SK-N-SH (cell line): ENCODE measurements at regions of chr9 and their contacts with region 1.

Region 1: GRCh38 chr9:128995791-128996190 is 32.3 kb downstream of the SH3GLB2 start:
- DNase-seq: no peak
- H3K4me3 ChIP-seq: no peak overlapping the region
- H3K27ac ChIP-seq: no peak overlapping the region
- H3K4me1 ChIP-seq: no peaks in the 10 kb centered on the region; a peak in 1 of 4 replicates
- H3K27me3 ChIP-seq: no peaks in the 10 kb centered on the region
- CTCF ChIP-seq: no peak
- EP300 ChIP-seq: no peak
- RAD21 ChIP-seq: no peak

Region 2: GRCh38 chr9:128558431-128559310 is 437.1 kb before region 1 on chr9:
- CTCF ChIA-PET with region 1: no interaction called
- POLR2A ChIA-PET with region 1: no interaction called
- DNase-seq: peak; percentile 72
- H3K4me3 ChIP-seq: peak overlapping the region; percentile 12 to 47; a peak in 3 of 4 replicates
- H3K27ac ChIP-seq: peak overlapping the region; percentile 77 to 87
- H3K4me1 ChIP-seq: peaks cover 27 to 47% of the 10 kb centered on the region in 2 experiments
- H3K27me3 ChIP-seq: no peaks in the 10 kb centered on the region
- CTCF ChIP-seq: no peak
- EP300 ChIP-seq: peak; percentile 0 to 71; a peak in 2 of 4 replicates
- RAD21 ChIP-seq: peak; percentile 17; the same call in 1 of the 2 replicates

Region 3: GRCh38 chr9:129006328-129007034 is 10.7 kb after region 1 on chr9:
- CTCF ChIA-PET with region 1: interaction called, 11 read pairs
- POLR2A ChIA-PET with region 1: no interaction called
- DNase-seq: peak; percentile 89
- H3K4me3 ChIP-seq: peak overlapping the region in 1 of 2 experiments; percentile 40; a peak in 1 of 4 replicates
- H3K27ac ChIP-seq: no peak overlapping the region
- H3K4me1 ChIP-seq: no peaks in the 10 kb centered on the region; a peak in 1 of 4 replicates
- H3K27me3 ChIP-seq: no peaks in the 10 kb centered on the region
- CTCF ChIP-seq: peak; percentile 88
- EP300 ChIP-seq: no peak
- RAD21 ChIP-seq: peak; percentile 65